Gastrocnemius medialis (tissue), 4 donors: ENCODE measurements at regions of chr16 and their contacts with region 1.

Region 1: GRCh38 chr16:65672960-65673359 is 551.1 kb upstream of the CDH11 start:
- DNase-seq: no peak
- ATAC-seq: no peak
- H3K4me3 ChIP-seq: no peak overlapping the region
- H3K27ac ChIP-seq: no peak overlapping the region
- H3K4me1 ChIP-seq: no peaks in the 10 kb centered on the region
- H3K27me3 ChIP-seq: no peaks in the 10 kb centered on the region
- CTCF ChIP-seq: no peak
- POLR2A ChIP-seq: no peak

Region 2: DNA sequence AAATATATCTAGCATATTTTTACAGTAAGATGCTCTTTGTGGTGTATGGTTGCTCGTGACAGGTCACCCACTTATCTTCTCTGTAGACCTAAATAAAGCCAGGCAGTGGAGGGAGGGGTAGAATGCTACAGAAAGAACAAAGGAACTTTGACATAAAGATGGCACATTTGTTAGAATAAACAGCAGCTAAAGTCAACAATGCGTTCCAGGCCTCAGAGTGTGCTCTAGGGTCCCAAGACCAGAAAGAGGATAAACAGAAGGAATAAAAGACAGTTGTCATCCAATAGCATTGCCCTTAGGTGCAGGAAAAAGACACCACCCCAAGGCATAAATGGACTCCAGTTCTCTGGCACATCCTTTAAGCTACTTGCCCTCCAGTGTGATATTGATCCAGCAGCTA is 28.1 kb before region 1 on chr16:
- in situ Hi-C with region 1: no loop called
- intact Hi-C with region 1: loop called (anchors 1 kb)
- DNase-seq: no peak
- ATAC-seq: no peak
- H3K4me3 ChIP-seq: no peak overlapping the region
- H3K27ac ChIP-seq: no peak overlapping the region
- H3K4me1 ChIP-seq: no peaks in the 10 kb centered on the region
- H3K27me3 ChIP-seq: no peaks in the 10 kb centered on the region
- CTCF ChIP-seq: no peak
- POLR2A ChIP-seq: no peak